Mammary epithelial cell (primary cell): ENCODE measurements at regions of chr18 and their contacts with region 1.

Region 1: DNA sequence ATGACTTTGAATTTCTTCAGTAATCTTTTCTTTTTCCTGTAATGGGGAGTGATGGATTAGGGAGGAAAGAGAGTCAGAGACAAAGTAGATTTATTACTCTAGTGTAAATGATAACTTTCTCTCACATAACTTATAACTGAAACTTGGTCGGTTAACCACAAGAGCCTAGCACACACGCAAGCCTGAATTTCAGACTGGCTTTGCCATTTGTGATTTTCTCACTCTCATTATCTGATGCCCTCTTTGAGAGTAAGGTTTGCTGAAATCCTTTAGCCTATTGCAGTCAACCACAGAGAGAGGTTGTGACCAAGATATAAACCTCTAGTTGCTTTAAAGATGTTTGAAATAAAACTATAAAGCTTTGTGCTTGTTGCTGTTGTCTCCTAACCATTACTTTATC is 117.9 kb upstream of the NETO1 start:
- DNase-seq: no peak
- H3K4me3 ChIP-seq: no peak overlapping the region
- H3K27ac ChIP-seq: no peak overlapping the region
- H3K4me1 ChIP-seq: peaks cover 3% of the 10 kb centered on the region
- H3K27me3 ChIP-seq: no peaks in the 10 kb centered on the region
- CTCF ChIP-seq: no peak

Region 2: DNA sequence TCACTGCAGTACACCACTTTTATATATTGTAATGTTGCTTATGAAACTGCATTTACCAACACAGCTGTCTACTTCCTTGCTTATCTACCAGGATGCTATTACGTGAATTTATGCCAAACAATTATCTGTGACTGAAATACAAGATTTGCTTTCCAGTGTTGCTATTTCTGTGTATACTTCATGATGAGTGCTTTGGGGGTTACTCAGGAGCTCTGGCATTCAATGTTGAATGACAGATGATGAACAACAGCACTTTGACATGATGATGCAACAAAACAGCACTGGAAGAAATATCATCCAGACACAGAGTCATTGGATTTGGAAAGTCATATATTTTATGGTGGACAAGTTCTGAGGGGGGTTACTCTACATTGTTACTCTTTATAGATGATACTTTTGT is 243.7 kb before region 1 on chr18:
- CTCF ChIA-PET with region 1: no interaction called
- dilution Hi-C with region 1: no loop called
- in situ Hi-C with region 1: no loop called
- intact Hi-C with region 1: no loop called
- DNase-seq: no peak
- H3K4me3 ChIP-seq: no peak overlapping the region
- H3K27ac ChIP-seq: no peak overlapping the region
- H3K4me1 ChIP-seq: no peaks in the 10 kb centered on the region
- H3K27me3 ChIP-seq: peaks cover 2% of the 10 kb centered on the region
- CTCF ChIP-seq: no peak

Region 3: DNA sequence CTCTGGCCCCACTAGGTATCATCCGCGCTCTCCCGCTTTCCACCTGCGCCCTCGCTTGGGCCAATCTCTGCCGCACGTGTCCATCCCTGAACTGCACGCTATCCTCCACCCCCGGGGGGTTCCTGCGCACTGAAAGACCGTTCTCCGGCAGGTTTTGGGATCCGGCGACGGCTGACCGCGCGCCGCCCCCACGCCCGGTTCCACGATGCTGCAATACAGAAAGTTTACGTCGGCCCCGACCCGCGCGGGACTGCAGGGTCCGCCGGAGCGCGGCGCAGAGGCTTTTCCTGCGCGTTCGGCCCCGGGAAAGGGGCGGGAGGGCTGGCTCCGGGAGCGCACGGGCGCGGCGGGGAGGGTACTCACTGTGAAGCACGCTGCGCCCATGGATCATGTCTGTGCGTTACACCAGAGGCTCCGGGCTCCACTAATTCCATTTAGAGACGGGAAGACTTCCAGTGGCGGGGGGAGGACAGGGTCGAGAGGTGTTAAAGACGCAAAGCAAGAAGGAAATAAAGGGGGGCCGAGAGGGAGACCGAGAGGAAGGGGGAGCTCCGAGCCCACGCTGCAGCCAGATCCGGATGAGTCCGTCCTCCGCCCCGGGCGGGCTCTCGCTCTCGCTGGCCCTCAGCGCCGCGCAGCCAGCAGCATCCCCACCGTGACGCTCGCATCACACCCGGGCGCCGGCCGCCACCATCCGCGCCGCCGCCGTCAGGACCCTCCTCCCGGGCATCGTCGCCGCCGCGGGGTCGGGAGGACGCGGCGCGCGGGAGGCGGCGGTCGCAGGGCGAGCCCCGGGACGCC is 118.6 kb before region 1 on chr18:
- CTCF ChIA-PET with region 1: interaction called, 11 read pairs
- dilution Hi-C with region 1: no loop called
- in situ Hi-C with region 1: no loop called
- intact Hi-C with region 1: no loop called
- DNase-seq: peak; percentile 41
- H3K4me3 ChIP-seq: peak overlapping the region; percentile 32 to 44 (median 42)
- H3K27ac ChIP-seq: no peak overlapping the region
- H3K4me1 ChIP-seq: peaks cover 23% of the 10 kb centered on the region
- H3K27me3 ChIP-seq: peaks cover 37% of the 10 kb centered on the region
- CTCF ChIP-seq: no peak